Activated CD4-positive, alpha-beta T cell treated with anti-CD3 and anti-CD28 coated beads, Interleukin-2, amount 10 ng/mL, durations not matched to agents 24 days and 14 days (primary cell): ENCODE measurements at regions of chr12 and their contacts with region 1.

Region 1: GRCh38 chr12:132908145-132909044 is 21.0 kb upstream of the CHFR start:
- DNase-seq: peak; percentile 97
- H3K4me3 Mint-ChIP-seq: peak overlapping the region; percentile 89
- H3K27ac Mint-ChIP-seq: peak overlapping the region; percentile 89
- H3K4me1 Mint-ChIP-seq: peaks cover 3% of the 10 kb centered on the region
- H3K27me3 Mint-ChIP-seq: peaks cover 10% of the 10 kb centered on the region

Region 2: GRCh38 chr12:132771126-132771838 is 137.1 kb before region 1 on chr12:
- intact Hi-C with region 1: loop called (anchors 1 kb)
- DNase-seq: peak; percentile 83
- H3K4me3 Mint-ChIP-seq: peak overlapping the region; percentile 67
- H3K27ac Mint-ChIP-seq: peak overlapping the region; percentile 81
- H3K4me1 Mint-ChIP-seq: peaks cover 25% of the 10 kb centered on the region
- H3K27me3 Mint-ChIP-seq: no peaks in the 10 kb centered on the region

Region 3: GRCh38 chr12:132887513-132888351 is 20.7 kb before region 1 on chr12 and contains the start of gene CHFR:
- intact Hi-C with region 1: loop called (anchors 1 kb)
- DNase-seq: peak; percentile 98
- H3K4me3 Mint-ChIP-seq: peak within 1 kb of the TSS; percentile 98
- H3K27ac Mint-ChIP-seq: peak within 1 kb of the TSS; percentile 99
- H3K4me1 Mint-ChIP-seq: peaks cover 13% of the 10 kb centered on the region
- H3K27me3 Mint-ChIP-seq: no peaks in the 10 kb centered on the region
- total RNA-seq, gene CHFR: 52.9 and 60.7 TPM in 2 replicates

Region 4: DNA sequence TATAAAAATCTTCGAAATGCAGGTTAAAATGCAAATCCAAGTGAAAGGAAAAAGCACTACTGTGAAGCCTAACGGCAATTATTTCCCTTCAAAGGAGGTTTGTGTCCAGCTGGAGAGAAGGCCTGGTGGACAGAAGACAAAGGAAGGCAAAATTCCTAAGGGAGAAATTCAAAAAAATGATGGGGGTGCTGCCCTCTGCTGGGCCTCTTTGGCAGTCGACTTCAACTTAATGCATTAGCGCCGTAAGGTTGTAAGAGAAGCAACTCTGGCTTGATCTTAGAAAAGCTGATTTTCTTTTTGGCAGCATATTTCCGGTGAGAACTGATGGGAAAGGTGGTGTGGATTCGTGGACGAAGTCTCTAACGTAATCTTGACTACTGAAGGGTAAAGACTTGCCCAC is 13.3 kb after region 1 on chr12:
- intact Hi-C with region 1: no loop called
- DNase-seq: no peak
- H3K4me3 Mint-ChIP-seq: no peak overlapping the region
- H3K27ac Mint-ChIP-seq: no peak overlapping the region
- H3K4me1 Mint-ChIP-seq: no peaks in the 10 kb centered on the region
- H3K27me3 Mint-ChIP-seq: no peaks in the 10 kb centered on the region

Region 5: GRCh38 chr12:132986001-132986912 is 77.9 kb after region 1 on chr12 and contains the start of gene ZNF26:
- intact Hi-C with region 1: loop called (anchors 1 kb)
- DNase-seq: peak; percentile 96
- H3K4me3 Mint-ChIP-seq: peak within 1 kb of the TSS; percentile 86
- H3K27ac Mint-ChIP-seq: peak within 1 kb of the TSS; percentile 95
- H3K4me1 Mint-ChIP-seq: peaks cover 21% of the 10 kb centered on the region
- H3K27me3 Mint-ChIP-seq: no peaks in the 10 kb centered on the region
- total RNA-seq, gene ZNF26: 18.3 and 20.1 TPM in 2 replicates

Region 6: GRCh38 chr12:133130038-133130807 is 221.8 kb after region 1 on chr12 and contains the starts of genes ZNF10 and ZNF891:
- intact Hi-C with region 1: loop called (anchors 1 kb)
- DNase-seq: peak; percentile 99
- H3K4me3 Mint-ChIP-seq: peak within 1 kb of the TSS; percentile 98
- H3K27ac Mint-ChIP-seq: peak within 1 kb of the TSS; percentile 99
- H3K4me1 Mint-ChIP-seq: peaks cover 11% of the 10 kb centered on the region
- H3K27me3 Mint-ChIP-seq: no peaks in the 10 kb centered on the region
- total RNA-seq, gene ZNF10: 3.3 and 4.2 TPM in 2 replicates
- total RNA-seq, gene ZNF891: 2.2 and 2.4 TPM in 2 replicates